Activated T-helper 2 cell treated with anti-CD3 and anti-CD28 coated beads, Interferon-gamma antibody, Interleukin-2, Interleukin-4, amounts not matched to agents 10 μg/mL and 5 μg/mL and 100 μg/mL, durations not matched to agents 14 hours and 24 hours and 36 hours (primary cell): ENCODE measurements at regions of chrX and their contacts with region 1.

Region 1: GRCh38 chrX:69538321-69538876 is 34.3 kb downstream of the NALF2 start:
- DNase-seq: peak; percentile 54
- H3K4me3 Mint-ChIP-seq: peak overlapping the region; percentile 39
- H3K27ac Mint-ChIP-seq: no peak overlapping the region
- H3K4me1 Mint-ChIP-seq: peaks cover 19% of the 10 kb centered on the region
- H3K27me3 Mint-ChIP-seq: no peaks in the 10 kb centered on the region

Region 2: GRCh38 chrX:69615779-69616456 is 77.5 kb after region 1 on chrX and contains the start of gene EDA:
- intact Hi-C with region 1: loop called (anchors 2 kb)
- DNase-seq: peak; percentile 64
- H3K4me3 Mint-ChIP-seq: peak within 1 kb of the TSS; percentile 79
- H3K27ac Mint-ChIP-seq: no peak within 1 kb of the TSS
- H3K4me1 Mint-ChIP-seq: peaks cover 4% of the 10 kb centered on the region
- H3K27me3 Mint-ChIP-seq: peaks cover 11% of the 10 kb centered on the region
- total RNA-seq, gene EDA: 0.57 TPM in 2 replicates

Region 3: GRCh38 chrX:70030301-70030767 is 491.9 kb after region 1 on chrX:
- intact Hi-C with region 1: loop called (anchors 2 kb)
- DNase-seq: peak; percentile 13
- H3K4me3 Mint-ChIP-seq: no peak overlapping the region
- H3K27ac Mint-ChIP-seq: no peak overlapping the region
- H3K4me1 Mint-ChIP-seq: peaks cover 6% of the 10 kb centered on the region
- H3K27me3 Mint-ChIP-seq: no peaks in the 10 kb centered on the region

Region 4: GRCh38 chrX:70096052-70096451 is 557.7 kb after region 1 on chrX:
- intact Hi-C with region 1: loop called (anchors 5 kb)
- DNase-seq: no peak
- H3K4me3 Mint-ChIP-seq: no peak overlapping the region
- H3K27ac Mint-ChIP-seq: no peak overlapping the region
- H3K4me1 Mint-ChIP-seq: no peaks in the 10 kb centered on the region
- H3K27me3 Mint-ChIP-seq: peaks cover 3% of the 10 kb centered on the region

Region 5: GRCh38 chrX:70133303-70134115 is 595.1 kb after region 1 on chrX and contains the start of gene IGBP1:
- intact Hi-C with region 1: loop called (anchors 1 kb)
- DNase-seq: peak; percentile 76
- H3K4me3 Mint-ChIP-seq: peak within 1 kb of the TSS; percentile 98
- H3K27ac Mint-ChIP-seq: peak within 1 kb of the TSS; percentile 91
- H3K4me1 Mint-ChIP-seq: peaks cover 20% of the 10 kb centered on the region
- H3K27me3 Mint-ChIP-seq: no peaks in the 10 kb centered on the region
- total RNA-seq, gene IGBP1: 33.0 and 33.6 TPM in 2 replicates